Lower leg skin (tissue), 4 donors: ENCODE measurements at regions of chr15 and their contacts with region 1.

Region 1: GRCh38 chr15:51114437-51115119 is 19.9 kb upstream of the TNFAIP8L3 start:
- DNase-seq: no peak
- H3K4me3 ChIP-seq: no peak overlapping the region
- CTCF ChIP-seq: no peak
- POLR2A ChIP-seq: no peak

Region 2: DNA sequence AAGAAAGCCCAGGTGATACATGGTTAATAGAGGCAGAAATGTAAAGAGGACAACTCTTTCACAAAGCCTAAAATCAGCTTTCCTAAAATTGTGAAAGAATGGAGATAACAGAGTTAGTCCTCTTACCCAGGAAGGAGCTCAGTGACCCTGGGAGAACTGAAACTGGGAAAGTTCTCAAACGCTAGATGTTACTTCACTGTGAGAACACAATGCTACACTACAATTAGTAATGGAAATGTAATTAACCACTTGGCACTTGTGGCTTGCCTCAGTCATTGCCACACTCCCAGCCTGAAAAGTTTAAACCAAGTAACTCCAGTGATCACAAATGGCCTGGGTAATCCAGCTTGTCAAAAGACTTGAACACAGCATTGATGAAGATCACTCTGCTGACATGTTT is 1794.2 kb before region 1 on chr15:
- intact Hi-C with region 1: no loop called
- DNase-seq: no peak
- H3K4me3 ChIP-seq: no peak overlapping the region
- CTCF ChIP-seq: no peak
- POLR2A ChIP-seq: no peak

Region 3: GRCh38 chr15:51046799-51047482 is 67.6 kb before region 1 on chr15:
- intact Hi-C with region 1: no loop called
- DNase-seq: no peak
- H3K4me3 ChIP-seq: no peak overlapping the region
- CTCF ChIP-seq: no peak
- POLR2A ChIP-seq: no peak

Region 4: GRCh38 chr15:51067510-51067909 is 47.1 kb before region 1 on chr15:
- intact Hi-C with region 1: loop called (anchors 5 kb)
- DNase-seq: no peak
- H3K4me3 ChIP-seq: no peak overlapping the region
- CTCF ChIP-seq: no peak
- POLR2A ChIP-seq: no peak

Region 5: DNA sequence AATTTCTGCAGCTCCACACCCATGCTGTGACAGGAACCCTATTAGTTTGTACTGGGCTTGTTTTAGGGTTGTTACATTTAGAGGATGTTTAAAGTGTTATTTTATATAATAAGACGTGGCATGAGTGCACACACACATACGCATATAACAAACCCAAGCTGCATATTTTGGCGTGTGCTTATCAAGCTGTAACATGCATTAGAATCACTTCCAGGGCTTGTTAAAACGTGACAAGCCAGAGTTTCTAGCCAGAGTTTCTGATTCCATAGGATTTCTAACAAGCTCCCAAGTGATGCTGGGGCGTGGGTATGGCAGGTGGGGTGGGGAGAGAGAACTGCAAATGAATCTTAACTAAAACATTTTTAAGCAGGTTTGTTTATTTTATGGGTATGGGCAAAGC is 1658.2 kb after region 1 on chr15:
- intact Hi-C with region 1: no loop called
- DNase-seq: no peak
- H3K4me3 ChIP-seq: no peak overlapping the region
- CTCF ChIP-seq: no peak
- POLR2A ChIP-seq: no peak